A549 (cell line): ENCODE measurements at regions of chr20 and their contacts with region 1.

Region 1: GRCh38 chr20:21615617-21616080 is 89.8 kb upstream of the PAX1 start:
- DNase-seq: peak; percentile 71 to 73
- ATAC-seq: peak; percentile 88 to 98
- H3K4me3 ChIP-seq: no peak overlapping the region
- H3K27ac ChIP-seq: no peak overlapping the region
- H3K4me1 ChIP-seq: no peaks in the 10 kb centered on the region
- CTCF ChIP-seq: peak; percentile 84
- EP300 ChIP-seq: no peak
- POLR2A ChIP-seq: no peak
- RAD21 ChIP-seq: peak; percentile 77 to 87

Region 2: GRCh38 chr20:20837574-20838021 is 778.1 kb before region 1 on chr20:
- CTCF ChIA-PET with region 1: interaction called, 80 read pairs
- POLR2A ChIA-PET with region 1: no interaction called
- DNase-seq: peak; percentile 59 to 65
- ATAC-seq: peak; percentile 80 to 89; a peak in 5 of 6 replicates
- H3K4me3 ChIP-seq: no peak overlapping the region
- H3K27ac ChIP-seq: no peak overlapping the region
- H3K4me1 ChIP-seq: no peaks in the 10 kb centered on the region
- CTCF ChIP-seq: peak; percentile 85
- EP300 ChIP-seq: no peak
- POLR2A ChIP-seq: no peak
- RAD21 ChIP-seq: peak; percentile 85 to 89

Region 3: DNA sequence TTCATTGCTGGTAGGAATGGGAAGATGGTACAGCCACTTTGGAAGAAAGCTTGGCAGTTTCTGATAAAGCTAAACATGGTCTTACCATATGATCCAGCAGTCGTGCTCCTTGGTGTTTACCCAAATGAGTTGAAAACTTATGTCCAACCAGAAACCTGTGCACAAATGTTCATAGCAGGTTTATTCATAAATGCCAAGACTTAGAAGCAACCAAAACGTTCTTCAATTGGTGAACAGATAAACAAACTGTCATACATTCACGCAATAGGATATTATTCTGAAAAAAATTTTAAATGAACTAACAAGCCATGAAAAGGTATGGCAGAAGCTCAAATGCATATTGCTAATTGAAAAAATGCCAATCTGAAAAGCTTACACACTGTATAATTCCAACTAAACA is 626.6 kb before region 1 on chr20:
- CTCF ChIA-PET with region 1: no interaction called
- POLR2A ChIA-PET with region 1: no interaction called
- DNase-seq: no peak
- ATAC-seq: no peak
- H3K4me3 ChIP-seq: no peak overlapping the region
- H3K27ac ChIP-seq: no peak overlapping the region
- H3K4me1 ChIP-seq: no peaks in the 10 kb centered on the region
- CTCF ChIP-seq: no peak
- EP300 ChIP-seq: no peak
- POLR2A ChIP-seq: no peak
- RAD21 ChIP-seq: no peak

Region 4: GRCh38 chr20:21182832-21183563 is 432.7 kb before region 1 on chr20:
- CTCF ChIA-PET with region 1: no interaction called
- POLR2A ChIA-PET with region 1: no interaction called
- DNase-seq: peak in 1 of 2 experiments; percentile 47
- ATAC-seq: peak; percentile 85 to 88
- H3K4me3 ChIP-seq: no peak overlapping the region
- H3K27ac ChIP-seq: peak overlapping the region; percentile 16 to 66; a peak in 4 of 6 replicates
- H3K4me1 ChIP-seq: peaks cover 32% of the 10 kb centered on the region
- CTCF ChIP-seq: no peak
- EP300 ChIP-seq: no peak; a peak in 1 of 5 replicates
- POLR2A ChIP-seq: no peak
- RAD21 ChIP-seq: no peak

Region 5: GRCh38 chr20:21529863-21530262 is 85.8 kb before region 1 on chr20:
- CTCF ChIA-PET with region 1: interaction called, 10 read pairs
- POLR2A ChIA-PET with region 1: no interaction called
- DNase-seq: no peak
- ATAC-seq: peak in 1 of 2 experiments; percentile 54; a peak in 2 of 6 replicates
- H3K4me3 ChIP-seq: no peak overlapping the region
- H3K27ac ChIP-seq: no peak overlapping the region
- H3K4me1 ChIP-seq: no peaks in the 10 kb centered on the region
- CTCF ChIP-seq: peak; percentile 41
- EP300 ChIP-seq: no peak
- POLR2A ChIP-seq: no peak
- RAD21 ChIP-seq: 0 out of 5 replicates have a peak, but pooled peaks of 1 of the 2 experiments have one; percentile 18

Region 6: DNA sequence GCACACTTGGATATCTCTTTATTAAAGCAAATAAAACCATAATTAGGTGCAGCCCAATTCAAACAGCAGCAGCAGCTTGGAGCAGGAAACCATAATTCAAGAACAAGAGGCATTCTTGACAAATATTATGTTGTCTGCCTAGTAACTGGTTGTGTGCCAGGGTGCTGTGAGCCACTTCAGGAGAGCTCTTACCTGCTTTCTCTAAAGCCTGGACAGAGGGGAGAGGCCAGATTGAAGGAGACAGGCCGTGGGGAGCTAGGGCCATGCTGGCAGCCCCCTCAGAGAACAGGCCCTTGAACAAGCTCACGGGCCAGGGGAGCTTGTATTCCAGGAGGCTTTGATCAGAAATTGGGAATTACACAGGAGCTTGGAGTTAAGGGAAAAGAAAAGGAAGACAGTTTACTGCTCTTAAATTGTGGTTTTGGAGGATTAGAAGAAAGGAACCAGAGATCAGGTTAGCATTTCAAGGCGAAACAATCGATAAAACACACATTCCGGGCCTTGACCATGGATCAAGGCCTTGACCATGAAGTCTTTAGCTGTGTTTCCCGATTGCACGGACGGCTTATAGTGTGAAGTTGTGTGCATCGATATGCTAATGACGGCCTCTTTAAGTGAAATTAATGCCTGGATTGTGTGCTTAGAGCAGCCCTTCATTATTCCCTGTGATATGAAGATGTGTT is 32.0 kb before region 1 on chr20:
- CTCF ChIA-PET with region 1: interaction called, 21 read pairs
- POLR2A ChIA-PET with region 1: no interaction called
- DNase-seq: no peak
- ATAC-seq: no peak
- H3K4me3 ChIP-seq: no peak overlapping the region
- H3K27ac ChIP-seq: no peak overlapping the region
- H3K4me1 ChIP-seq: no peaks in the 10 kb centered on the region
- CTCF ChIP-seq: no peak
- EP300 ChIP-seq: no peak
- POLR2A ChIP-seq: no peak
- RAD21 ChIP-seq: no peak

Region 7: GRCh38 chr20:21628800-21629199 is 13.2 kb after region 1 on chr20:
- CTCF ChIA-PET with region 1: interaction called, 17 read pairs
- POLR2A ChIA-PET with region 1: no interaction called
- DNase-seq: no peak
- ATAC-seq: no peak
- H3K4me3 ChIP-seq: no peak overlapping the region
- H3K27ac ChIP-seq: no peak overlapping the region
- H3K4me1 ChIP-seq: no peaks in the 10 kb centered on the region
- CTCF ChIP-seq: no peak
- EP300 ChIP-seq: no peak
- POLR2A ChIP-seq: no peak
- RAD21 ChIP-seq: no peak